Mammary epithelial cell (primary cell): ENCODE measurements at regions of chr9 and their contacts with region 1.

Region 1: GRCh38 chr9:114906908-114907571 is 23.4 kb downstream of the TNFSF8 start:
- DNase-seq: peak; percentile 48
- H3K4me3 ChIP-seq: no peak overlapping the region
- H3K27ac ChIP-seq: no peak overlapping the region
- H3K4me1 ChIP-seq: peaks cover 31% of the 10 kb centered on the region
- H3K27me3 ChIP-seq: no peaks in the 10 kb centered on the region
- CTCF ChIP-seq: peak; percentile 61 to 62

Region 2: GRCh38 chr9:114662081-114662989 is 244.7 kb before region 1 on chr9:
- CTCF ChIA-PET with region 1: interaction called, 8 read pairs
- dilution Hi-C with region 1: no loop called
- in situ Hi-C with region 1: no loop called
- intact Hi-C with region 1: loop called (anchors 1 kb)
- DNase-seq: peak; percentile 29
- H3K4me3 ChIP-seq: no peak overlapping the region
- H3K27ac ChIP-seq: no peak overlapping the region
- H3K4me1 ChIP-seq: peaks cover 13% of the 10 kb centered on the region
- H3K27me3 ChIP-seq: no peaks in the 10 kb centered on the region
- CTCF ChIP-seq: peak; percentile 79 to 91

Region 3: GRCh38 chr9:114745108-114745848 is 161.8 kb before region 1 on chr9:
- CTCF ChIA-PET with region 1: interaction called, 4 read pairs
- dilution Hi-C with region 1: no loop called
- in situ Hi-C with region 1: loop called in 1 of 2 experiments (anchors 5 kb)
- intact Hi-C with region 1: no loop called
- DNase-seq: no peak
- H3K4me3 ChIP-seq: no peak overlapping the region
- H3K27ac ChIP-seq: no peak overlapping the region
- H3K4me1 ChIP-seq: no peaks in the 10 kb centered on the region
- H3K27me3 ChIP-seq: no peaks in the 10 kb centered on the region
- CTCF ChIP-seq: no peak

Region 4: GRCh38 chr9:114830546-114830945 is 76.5 kb before region 1 on chr9:
- CTCF ChIA-PET with region 1: no interaction called
- dilution Hi-C with region 1: no loop called
- in situ Hi-C with region 1: no loop called
- intact Hi-C with region 1: loop called (anchors 5 kb)
- DNase-seq: peak; percentile 14
- H3K4me3 ChIP-seq: no peak overlapping the region
- H3K27ac ChIP-seq: no peak overlapping the region
- H3K4me1 ChIP-seq: no peaks in the 10 kb centered on the region
- H3K27me3 ChIP-seq: no peaks in the 10 kb centered on the region
- CTCF ChIP-seq: no peak

Region 5: GRCh38 chr9:115013998-115014397 is 107.0 kb after region 1 on chr9:
- CTCF ChIA-PET with region 1: interaction called, 4 read pairs
- dilution Hi-C with region 1: loop called (anchors 5 kb)
- in situ Hi-C with region 1: loop called (anchors 5 to 10 kb)
- intact Hi-C with region 1: loop called (anchors 1 kb)
- DNase-seq: peak; percentile 57
- H3K4me3 ChIP-seq: no peak overlapping the region
- H3K27ac ChIP-seq: no peak overlapping the region
- H3K4me1 ChIP-seq: peaks cover under 1% of the 10 kb centered on the region
- H3K27me3 ChIP-seq: no peaks in the 10 kb centered on the region
- CTCF ChIP-seq: peak; percentile 74 to 83

Region 6: DNA sequence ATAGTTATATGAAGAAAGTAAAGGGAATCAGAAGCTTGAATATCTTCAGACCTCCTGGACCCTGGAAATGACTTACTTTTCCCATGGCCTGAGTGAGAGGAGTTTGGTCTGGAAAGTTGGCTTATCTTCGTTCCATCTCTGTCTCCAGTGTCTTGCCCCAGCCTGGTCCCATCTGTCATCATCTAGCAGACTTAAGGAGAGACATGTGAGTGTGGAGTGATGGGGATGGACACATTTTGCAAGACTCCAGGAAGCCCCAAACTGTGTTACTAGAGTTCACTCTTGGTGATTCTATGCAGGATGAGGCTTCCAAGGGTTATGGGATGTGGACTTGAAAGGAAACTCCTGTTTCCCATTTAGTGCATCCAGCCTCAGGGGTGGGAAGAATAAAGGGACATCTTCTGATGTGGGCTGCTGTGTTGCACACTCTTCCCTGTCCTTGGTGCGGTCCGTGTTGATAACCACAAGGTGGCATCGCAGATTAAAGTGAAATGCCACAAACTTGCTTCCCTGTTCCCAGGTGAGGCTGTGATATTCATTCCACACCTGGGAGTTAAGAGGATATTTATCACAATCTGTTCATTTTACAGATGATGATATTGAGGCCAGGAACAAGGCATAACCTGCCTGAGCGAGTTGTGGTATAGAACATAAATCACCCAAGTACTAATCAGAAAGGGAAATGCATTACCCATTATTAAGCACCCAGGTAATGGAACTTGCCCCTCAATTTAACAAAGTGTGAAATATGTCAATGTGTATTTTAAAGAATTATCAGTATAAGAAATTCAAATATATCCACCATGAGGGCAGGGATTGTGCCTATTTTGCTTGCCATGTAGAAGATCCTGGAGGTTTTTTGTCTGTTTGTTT is 976.7 kb after region 1 on chr9:
- CTCF ChIA-PET with region 1: no interaction called
- dilution Hi-C with region 1: no loop called
- in situ Hi-C with region 1: no loop called
- intact Hi-C with region 1: no loop called
- DNase-seq: peak; percentile 66
- H3K4me3 ChIP-seq: no peak overlapping the region
- H3K27ac ChIP-seq: no peak overlapping the region
- H3K4me1 ChIP-seq: no peaks in the 10 kb centered on the region
- H3K27me3 ChIP-seq: no peaks in the 10 kb centered on the region
- CTCF ChIP-seq: peak; percentile 74 to 86